Panc1 (cell line): ENCODE measurements at regions of chr1 and their contacts with region 1.

Region 1: GRCh38 chr1:10101929-10102328 is 69.2 kb downstream of the UBE4B start:
- DNase-seq: no peak
- ATAC-seq: no peak
- H3K4me3 ChIP-seq: no peak overlapping the region
- H3K27ac ChIP-seq: no peak overlapping the region
- H3K4me1 ChIP-seq: no peaks in the 10 kb centered on the region
- H3K27me3 ChIP-seq: no peaks in the 10 kb centered on the region
- CTCF ChIP-seq: no peak

Region 2: DNA sequence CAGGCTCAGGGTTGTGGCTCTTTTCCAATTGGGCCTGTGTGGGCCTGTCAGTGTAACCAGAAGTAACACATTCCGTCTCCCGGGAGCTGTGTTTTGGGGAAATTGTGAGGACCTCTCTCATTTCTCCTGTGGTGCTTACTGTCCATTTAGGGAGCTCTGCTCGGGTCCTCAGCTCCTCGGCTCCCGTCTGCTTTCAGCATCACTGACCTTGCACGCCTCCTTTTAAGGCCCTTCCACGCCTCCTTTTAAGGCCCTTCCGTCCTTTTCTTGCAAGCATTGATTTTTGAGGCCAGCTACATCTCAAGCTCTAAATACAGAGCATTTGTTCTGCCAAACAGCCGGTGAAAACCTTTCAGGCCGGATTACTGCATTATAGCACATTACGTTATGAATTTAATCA is 1146.5 kb before region 1 on chr1:
- CTCF ChIA-PET with region 1: no interaction called
- POLR2A ChIA-PET with region 1: no interaction called
- in situ Hi-C with region 1: no loop called
- intact Hi-C with region 1: no loop called
- DNase-seq: no peak
- ATAC-seq: no peak
- H3K4me3 ChIP-seq: no peak overlapping the region
- H3K27ac ChIP-seq: no peak overlapping the region
- H3K4me1 ChIP-seq: no peaks in the 10 kb centered on the region
- H3K27me3 ChIP-seq: no peaks in the 10 kb centered on the region
- CTCF ChIP-seq: no peak

Region 3: GRCh38 chr1:10472220-10473144 is 370.6 kb after region 1 on chr1 and contains the start of gene DFFA:
- CTCF ChIA-PET with region 1: no interaction called
- POLR2A ChIA-PET with region 1: interaction called, 12 read pairs
- in situ Hi-C with region 1: no loop called
- intact Hi-C with region 1: no loop called
- DNase-seq: peak; percentile 95
- ATAC-seq: peak; percentile 92
- H3K4me3 ChIP-seq: peak within 1 kb of the TSS; percentile 73 to 86
- H3K27ac ChIP-seq: peak within 1 kb of the TSS; percentile 83
- H3K4me1 ChIP-seq: peaks cover 17% of the 10 kb centered on the region
- H3K27me3 ChIP-seq: no peaks in the 10 kb centered on the region
- CTCF ChIP-seq: no peak
- total RNA-seq, gene DFFA: 68.1 TPM